CD8-positive, alpha-beta memory T cell (primary cell): ENCODE measurements at regions of chr4 and their contacts with region 1.

Region 1: DNA sequence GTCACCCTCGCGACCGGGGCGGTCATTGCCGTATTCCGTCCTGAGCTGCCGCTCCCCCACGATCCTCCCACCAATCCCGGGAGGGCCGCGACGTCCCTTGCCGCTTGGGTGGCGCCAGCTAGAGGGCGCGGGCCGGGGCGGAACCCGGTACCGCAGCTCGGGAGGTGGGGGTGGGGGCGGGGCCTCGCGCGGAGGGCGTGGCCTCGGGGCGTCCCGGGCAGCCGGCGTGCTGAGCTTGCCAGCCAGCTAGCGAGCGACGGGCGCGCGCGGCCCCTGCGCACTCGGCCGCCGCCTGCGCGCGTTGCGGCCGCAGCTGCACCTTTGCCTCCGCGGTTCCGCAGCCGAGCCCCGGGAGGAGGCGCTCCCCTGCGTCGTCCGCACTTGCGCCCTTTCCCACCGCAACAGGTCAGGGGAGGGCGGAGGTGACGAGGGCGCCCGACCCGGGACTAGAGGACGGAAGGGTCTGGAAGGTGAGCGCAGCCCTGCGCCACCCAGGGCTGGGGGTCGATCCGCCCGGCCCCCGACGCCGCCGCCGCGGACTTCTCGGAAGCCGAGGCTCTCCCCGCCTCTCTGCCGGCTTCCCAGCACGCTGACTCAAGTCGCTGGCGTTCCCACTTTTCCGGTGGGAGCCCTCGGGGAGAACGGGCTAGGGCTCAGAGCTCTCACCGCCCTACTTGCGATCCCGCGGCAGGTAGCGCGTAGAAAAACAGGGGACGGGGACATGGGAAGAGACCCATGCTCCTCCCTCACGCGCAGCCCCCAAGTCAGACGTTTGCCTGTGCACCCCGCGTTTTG is at the start of gene AFF1:
- DNase-seq: peak; percentile 85 to 92 (median 88)
- H3K4me3 ChIP-seq: peak within 1 kb of the TSS; percentile 95
- H3K4me3 Mint-ChIP-seq: peak within 1 kb of the TSS; percentile 92 to 96 (median 93)
- H3K27ac ChIP-seq: peak within 1 kb of the TSS; percentile 83
- H3K27ac Mint-ChIP-seq: peak within 1 kb of the TSS; percentile 90 to 98 (median 97)
- H3K4me1 ChIP-seq: peaks cover 45% of the 10 kb centered on the region
- H3K4me1 Mint-ChIP-seq: peaks cover 48 to 56% (median 54%) of the 10 kb centered on the region in 3 donors
- H3K27me3 ChIP-seq: no peaks in the 10 kb centered on the region
- H3K27me3 Mint-ChIP-seq: no peaks in the 10 kb centered on the region
- total RNA-seq, gene AFF1: 29.7 to 32.9 TPM

Region 2: DNA sequence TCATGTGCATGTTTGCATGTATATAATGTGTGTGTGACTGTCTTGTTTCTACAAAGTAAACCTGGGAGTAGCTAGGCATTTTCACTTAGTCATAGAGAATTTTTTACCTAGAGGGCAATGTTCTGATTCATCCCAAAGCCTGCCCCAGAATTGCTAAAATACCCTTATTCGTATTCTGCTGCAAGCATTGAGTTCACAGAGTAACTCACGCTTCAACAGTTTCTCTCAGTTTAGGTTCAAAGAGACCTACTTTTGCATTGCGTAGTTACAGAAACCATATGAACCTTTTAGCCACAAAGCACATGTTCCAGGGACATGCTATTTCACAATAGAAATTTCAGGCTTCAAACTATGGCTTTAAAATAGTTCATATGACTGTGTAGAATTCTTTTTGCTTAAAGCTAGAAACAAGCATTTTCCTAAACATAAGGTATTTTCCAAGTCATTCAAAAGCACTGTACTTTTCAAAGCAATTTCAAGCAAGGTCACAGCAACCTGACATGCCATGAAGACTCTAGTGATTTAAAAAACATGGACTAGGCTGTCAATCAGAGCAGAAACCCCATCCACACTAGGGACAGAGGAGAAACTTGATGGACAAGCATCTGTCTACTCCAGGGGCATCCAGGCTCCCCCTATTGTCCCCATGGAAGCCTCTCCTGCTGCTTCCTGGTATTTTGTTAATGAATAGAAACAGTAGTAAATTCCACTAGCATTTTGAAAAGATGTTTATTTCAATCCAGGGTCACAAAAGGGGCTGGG is 493.6 kb before region 1 on chr4:
- CTCF ChIA-PET with region 1: no interaction called
- POLR2A ChIA-PET with region 1: no interaction called
- DNase-seq: no peak
- H3K4me3 ChIP-seq: no peak overlapping the region
- H3K4me3 Mint-ChIP-seq: no peak overlapping the region
- H3K27ac ChIP-seq: no peak overlapping the region
- H3K27ac Mint-ChIP-seq: no peak overlapping the region
- H3K4me1 ChIP-seq: no peaks in the 10 kb centered on the region
- H3K4me1 Mint-ChIP-seq: no peaks in the 10 kb centered on the region
- H3K27me3 ChIP-seq: no peaks in the 10 kb centered on the region
- H3K27me3 Mint-ChIP-seq: peaks cover 0 to 4% of the 10 kb centered on the region in 2 donors

Region 3: GRCh38 chr4:86878640-86879039 is 56.3 kb before region 1 on chr4:
- CTCF ChIA-PET with region 1: no interaction called
- POLR2A ChIA-PET with region 1: no interaction called
- DNase-seq: no peak
- H3K4me3 ChIP-seq: no peak overlapping the region
- H3K4me3 Mint-ChIP-seq: no peak overlapping the region
- H3K27ac ChIP-seq: no peak overlapping the region
- H3K27ac Mint-ChIP-seq: no peak overlapping the region
- H3K4me1 ChIP-seq: no peaks in the 10 kb centered on the region
- H3K4me1 Mint-ChIP-seq: no peaks in the 10 kb centered on the region
- H3K27me3 ChIP-seq: no peaks in the 10 kb centered on the region
- H3K27me3 Mint-ChIP-seq: peaks cover 0 to 2% of the 10 kb centered on the region in 2 donors

Region 4: DNA sequence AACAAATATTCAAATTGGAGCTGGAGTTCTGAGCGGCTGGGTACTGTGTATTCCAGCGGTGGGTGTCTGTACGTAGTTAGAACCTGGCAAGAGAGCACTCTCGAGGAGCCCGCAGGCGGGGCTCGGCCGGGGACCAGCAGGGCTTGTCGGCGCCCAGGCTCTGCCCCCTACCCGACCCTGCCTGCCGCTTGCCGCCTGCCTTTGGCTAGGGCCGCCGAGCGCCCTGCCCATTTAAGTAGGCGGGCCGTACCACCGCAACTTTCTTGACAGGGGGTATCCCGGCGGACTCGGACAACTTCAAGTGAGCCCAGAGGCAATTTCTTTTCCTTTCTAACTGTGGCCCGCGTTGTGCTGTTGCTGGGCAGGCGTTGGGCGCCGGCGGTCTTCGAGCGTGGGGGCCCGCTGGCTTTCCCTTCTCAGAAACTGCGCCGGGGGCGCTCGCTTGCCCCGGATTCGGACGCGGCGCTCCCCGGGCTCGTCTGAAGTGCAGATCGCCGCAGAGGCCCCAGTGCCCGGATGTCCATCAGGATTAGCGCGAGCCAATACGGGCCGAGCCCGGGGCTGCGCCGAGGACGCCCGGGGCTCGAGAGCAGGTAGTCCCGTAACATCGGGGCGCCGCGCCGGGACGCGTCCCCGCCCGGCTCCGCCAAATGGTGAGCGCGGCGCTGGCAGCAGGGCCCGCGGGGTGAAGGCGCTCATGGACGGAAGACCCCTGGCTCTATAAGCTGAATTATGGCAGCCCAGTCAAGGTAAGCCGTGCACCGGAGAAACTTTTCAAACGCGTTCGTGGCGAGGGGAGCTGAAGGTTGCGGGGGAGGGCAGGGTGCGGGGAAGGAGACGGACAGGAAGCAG is 71.9 kb after region 1 on chr4:
- CTCF ChIA-PET with region 1: interaction called, 56 read pairs
- POLR2A ChIA-PET with region 1: interaction called, 128 read pairs
- DNase-seq: peak; percentile 81 to 92 (median 89)
- H3K4me3 ChIP-seq: peak overlapping the region; percentile 94
- H3K4me3 Mint-ChIP-seq: peak overlapping the region; percentile 92 to 95 (median 93)
- H3K27ac ChIP-seq: peak overlapping the region; percentile 85
- H3K27ac Mint-ChIP-seq: peak overlapping the region; percentile 94 to 100 (median 98)
- H3K4me1 ChIP-seq: peaks cover 53% of the 10 kb centered on the region
- H3K4me1 Mint-ChIP-seq: peaks cover 52 to 65% (median 63%) of the 10 kb centered on the region in 3 donors
- H3K27me3 ChIP-seq: no peaks in the 10 kb centered on the region
- H3K27me3 Mint-ChIP-seq: no peaks in the 10 kb centered on the region